Pancreas (tissue), 10 donors: ENCODE measurements at regions of chr3 and their contacts with region 1.

Region 1: DNA sequence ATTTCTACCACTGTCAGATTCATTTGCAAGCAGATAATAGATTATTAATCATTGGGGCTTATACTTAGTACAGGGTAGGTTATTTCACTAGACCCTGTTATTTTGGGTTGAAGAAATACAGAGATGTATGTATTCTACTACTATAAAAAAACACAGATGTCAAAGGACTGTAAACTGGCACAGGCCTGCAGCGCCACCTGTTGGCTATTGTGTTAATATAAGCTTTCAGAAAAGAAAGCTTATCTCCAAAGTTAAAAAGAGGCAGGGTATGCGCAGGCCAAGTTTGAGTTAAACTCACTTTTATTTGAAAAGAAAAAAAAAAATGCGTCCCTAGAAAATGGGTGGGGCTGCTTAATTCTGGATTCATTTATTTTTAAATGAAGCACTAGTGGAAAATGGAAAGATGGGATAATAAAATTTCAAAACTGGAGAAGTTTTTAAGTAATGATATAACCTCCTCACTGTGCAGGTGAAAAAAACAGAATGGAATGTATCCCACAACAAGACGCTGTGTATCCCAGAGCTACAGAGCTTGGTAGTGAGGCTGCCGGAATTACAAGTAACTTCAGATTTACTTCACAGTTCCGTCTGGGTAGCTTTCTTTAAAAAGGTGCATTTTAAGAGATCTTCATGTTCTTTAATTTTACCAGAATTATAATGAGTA is 407.2 kb upstream of the TGFBR2 start:
- DNase-seq: peak; percentile 22 to 84 (median 58)
- ATAC-seq: peak in 3 of 4 donors; percentile 73 to 84 (median 77)
- H3K4me3 ChIP-seq: no peak overlapping the region
- H3K27ac ChIP-seq: no peak overlapping the region
- H3K4me1 ChIP-seq: no peaks in the 10 kb centered on the region
- H3K27me3 ChIP-seq: no peaks in the 10 kb centered on the region
- CTCF ChIP-seq: peak; percentile 42 to 78 (median 62)

Region 2: DNA sequence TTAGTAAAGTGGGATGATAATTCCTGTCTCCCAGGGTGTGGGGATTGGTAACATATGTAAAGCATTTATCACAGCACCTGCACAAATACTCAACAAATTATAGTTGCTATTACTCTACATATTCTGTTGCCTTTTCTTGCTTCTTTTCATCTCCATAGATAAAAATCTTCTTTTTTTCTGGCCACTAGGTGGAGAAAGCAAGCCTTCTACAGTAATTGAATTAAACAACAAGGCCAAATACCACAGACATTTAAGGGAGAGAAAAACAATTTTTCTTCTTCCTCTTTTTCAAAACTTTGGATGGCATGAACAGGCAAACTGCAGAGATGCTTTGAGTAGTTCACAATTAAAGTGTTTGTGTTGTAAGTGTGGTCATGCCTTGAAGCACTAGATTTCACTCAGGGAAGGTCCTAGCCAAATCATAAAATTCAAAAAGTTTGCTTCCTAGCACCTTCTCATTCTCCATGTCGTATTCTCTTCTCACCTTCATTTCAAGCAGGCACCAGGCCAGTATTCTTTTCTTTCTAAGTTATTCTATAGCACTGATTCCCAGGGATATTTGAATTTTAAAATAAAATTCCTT is 86.2 kb before region 1 on chr3:
- intact Hi-C with region 1: loop called in 1 of 3 experiments (anchors 10 kb)
- DNase-seq: no peak
- ATAC-seq: peak in 3 of 4 donors; percentile 58 to 74 (median 70)
- H3K4me3 ChIP-seq: no peak overlapping the region
- H3K27ac ChIP-seq: no peak overlapping the region
- H3K4me1 ChIP-seq: peaks cover 0 to 4% (median 0%) of the 10 kb centered on the region in 3 donors
- H3K27me3 ChIP-seq: no peaks in the 10 kb centered on the region
- CTCF ChIP-seq: peak in 3 of 4 donors; percentile 39 to 54 (median 48)

Region 3: DNA sequence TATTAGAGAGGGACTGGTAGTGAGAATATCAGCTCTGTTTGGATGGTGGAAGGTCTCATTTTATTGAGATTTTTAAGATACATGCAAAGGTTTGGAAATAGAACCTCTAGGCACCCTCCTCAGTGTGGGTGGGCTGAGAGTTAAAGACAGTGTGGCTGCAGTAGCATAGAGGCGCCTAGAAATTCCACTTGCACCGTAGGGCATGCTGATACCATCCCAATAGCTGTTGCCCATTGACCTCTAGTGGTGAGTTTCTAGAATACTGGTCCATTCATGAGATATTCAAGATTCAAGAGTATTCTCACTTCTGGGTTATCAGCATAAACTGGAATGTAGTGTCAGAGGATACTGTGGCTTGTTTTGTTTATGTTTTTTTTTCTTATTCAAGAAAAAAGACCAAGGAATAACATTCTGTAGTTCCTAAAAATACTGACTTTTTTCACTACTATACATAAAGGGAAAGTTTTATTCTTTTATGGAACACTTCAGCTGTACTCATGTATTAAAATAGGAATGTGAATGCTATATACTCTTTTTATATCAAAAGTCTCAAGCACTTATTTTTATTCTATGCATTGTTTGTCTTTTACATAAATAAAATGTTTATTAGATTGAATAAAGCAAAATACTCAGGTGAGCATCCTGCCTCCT is 494.4 kb after region 1 on chr3:
- intact Hi-C with region 1: loop called in 1 of 3 experiments (anchors 10 kb)
- DNase-seq: peak in 2 of 6 donors; percentile 15 to 40
- ATAC-seq: peak; percentile 63 to 83 (median 81)
- H3K4me3 ChIP-seq: no peak overlapping the region
- H3K27ac ChIP-seq: no peak overlapping the region
- H3K4me1 ChIP-seq: peaks cover 14 to 26% (median 16%) of the 10 kb centered on the region in 3 donors
- H3K27me3 ChIP-seq: no peaks in the 10 kb centered on the region
- CTCF ChIP-seq: peak; percentile 38 to 72 (median 60)